ENCODE measurements at regions of chr2 and their contacts with region 1.

Region 1: GRCh38 chr2:10072656-10073480 is 7.3 kb downstream of the CYS1 start:
- DNase-seq: peak; percentile 88
- H3K4me3 Mint-ChIP-seq: no peak overlapping the region
- H3K27ac Mint-ChIP-seq: no peak overlapping the region
- H3K4me1 Mint-ChIP-seq: peaks cover 1% of the 10 kb centered on the region
- H3K27me3 Mint-ChIP-seq: peaks cover 45% of the 10 kb centered on the region

Region 2: DNA sequence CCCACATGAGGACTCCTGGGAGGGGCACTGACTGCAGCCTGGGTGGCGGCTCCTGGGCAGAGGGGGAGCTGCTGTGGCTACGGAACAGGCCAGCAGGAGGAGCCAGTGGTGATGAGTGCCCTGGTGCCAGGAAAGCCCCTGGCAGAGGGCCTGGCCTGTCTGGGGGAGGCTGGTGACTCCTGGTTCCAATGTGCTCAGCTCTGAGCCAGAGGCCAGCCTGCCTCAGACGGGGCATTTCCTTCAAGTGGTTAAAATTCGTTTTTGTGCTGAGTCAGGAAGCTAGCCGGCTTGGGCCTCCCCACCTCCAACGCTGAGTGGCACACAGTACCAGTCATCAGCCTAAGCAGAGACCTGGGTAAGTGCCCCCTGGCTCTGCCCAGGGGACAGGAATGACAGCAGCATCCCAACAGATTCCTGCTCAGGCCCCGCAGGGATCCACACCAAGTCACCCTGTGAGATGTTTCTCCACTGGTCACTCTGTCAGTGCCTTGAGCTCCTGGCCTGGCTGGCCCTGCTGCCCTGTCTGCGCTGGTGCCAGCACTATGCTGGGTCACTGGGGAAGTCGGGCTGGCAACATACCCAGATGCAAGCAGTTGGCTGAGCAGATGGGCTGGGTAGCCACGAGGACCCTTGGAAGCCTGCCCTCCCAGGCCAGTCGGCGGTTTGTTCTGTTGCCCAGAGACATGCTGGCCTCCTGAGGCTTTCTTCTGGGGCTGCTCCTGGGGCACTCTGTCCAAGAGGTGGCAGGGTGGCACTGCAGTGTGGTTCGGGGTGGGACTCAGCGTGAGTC is 36.6 kb before region 1 on chr2:
- CTCF ChIA-PET with region 1: interaction called, 12 read pairs
- intact Hi-C with region 1: no loop called
- DNase-seq: peak; percentile 61
- H3K4me3 Mint-ChIP-seq: no peak overlapping the region
- H3K27ac Mint-ChIP-seq: no peak overlapping the region
- H3K4me1 Mint-ChIP-seq: no peaks in the 10 kb centered on the region
- H3K27me3 Mint-ChIP-seq: no peaks in the 10 kb centered on the region

Region 3: GRCh38 chr2:10091182-10091888 is 18.5 kb after region 1 on chr2:
- CTCF ChIA-PET with region 1: interaction called, 117 read pairs
- intact Hi-C with region 1: no loop called
- DNase-seq: peak; percentile 34
- H3K4me3 Mint-ChIP-seq: peak overlapping the region; percentile 23
- H3K27ac Mint-ChIP-seq: no peak overlapping the region
- H3K4me1 Mint-ChIP-seq: peaks cover 8% of the 10 kb centered on the region
- H3K27me3 Mint-ChIP-seq: peaks cover 61% of the 10 kb centered on the region

Region 4: GRCh38 chr2:10103179-10103732 is 30.4 kb after region 1 on chr2:
- CTCF ChIA-PET with region 1: interaction called, 117 read pairs
- intact Hi-C with region 1: no loop called
- DNase-seq: no peak
- H3K4me3 Mint-ChIP-seq: no peak overlapping the region
- H3K27ac Mint-ChIP-seq: no peak overlapping the region
- H3K4me1 Mint-ChIP-seq: no peaks in the 10 kb centered on the region
- H3K27me3 Mint-ChIP-seq: no peaks in the 10 kb centered on the region

Region 5: GRCh38 chr2:10141736-10142642 is 69.1 kb after region 1 on chr2:
- CTCF ChIA-PET with region 1: interaction called, 6 read pairs
- intact Hi-C with region 1: loop called (anchors 2 kb)
- DNase-seq: no peak
- H3K4me3 Mint-ChIP-seq: no peak overlapping the region
- H3K27ac Mint-ChIP-seq: no peak overlapping the region
- H3K4me1 Mint-ChIP-seq: peaks cover 18% of the 10 kb centered on the region
- H3K27me3 Mint-ChIP-seq: no peaks in the 10 kb centered on the region

Region 6: GRCh38 chr2:10434886-10435819 is 362.3 kb after region 1 on chr2:
- CTCF ChIA-PET with region 1: interaction called, 124 read pairs
- intact Hi-C with region 1: loop called (anchors 1 kb)
- DNase-seq: peak; percentile 69
- H3K4me3 Mint-ChIP-seq: no peak overlapping the region
- H3K27ac Mint-ChIP-seq: no peak overlapping the region
- H3K4me1 Mint-ChIP-seq: peaks cover 7% of the 10 kb centered on the region
- H3K27me3 Mint-ChIP-seq: peaks cover 9% of the 10 kb centered on the region

Region 7: DNA sequence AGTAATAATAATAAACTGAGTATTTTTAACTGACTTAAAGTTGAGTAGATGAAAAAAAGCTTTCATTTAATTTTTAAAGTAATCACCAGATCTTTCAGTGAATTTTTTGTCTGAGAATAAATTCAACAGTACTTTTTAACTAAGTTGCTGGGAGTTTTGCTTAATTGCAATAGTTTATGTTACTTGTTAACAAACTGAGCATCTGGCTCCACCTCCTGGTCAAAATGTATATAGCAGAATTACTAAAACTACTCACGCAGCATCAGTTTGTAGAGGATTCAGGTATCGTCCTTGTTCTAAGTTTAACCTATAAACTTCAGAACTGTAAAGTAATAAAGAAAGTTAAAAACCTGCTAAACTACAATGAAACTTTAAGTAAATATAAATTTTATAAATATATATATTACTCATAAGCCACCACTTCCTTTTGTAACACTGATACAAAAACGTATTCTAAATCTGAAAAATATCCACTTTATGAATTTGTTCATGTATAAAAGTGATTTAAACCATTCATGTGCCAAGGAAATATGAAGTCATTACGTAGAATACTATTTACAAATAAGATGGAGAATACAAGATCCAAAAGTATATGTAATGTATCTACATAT is 595.6 kb after region 1 on chr2:
- CTCF ChIA-PET with region 1: no interaction called
- intact Hi-C with region 1: loop called (anchors 1 kb)
- DNase-seq: peak; percentile 26
- H3K4me3 Mint-ChIP-seq: no peak overlapping the region
- H3K27ac Mint-ChIP-seq: no peak overlapping the region
- H3K4me1 Mint-ChIP-seq: peaks cover 8% of the 10 kb centered on the region
- H3K27me3 Mint-ChIP-seq: no peaks in the 10 kb centered on the region